Right ventricle myocardium inferior (tissue), 1 donor: ENCODE measurements at regions of chr18 and their contacts with region 1.

Region 1: GRCh38 chr18:51447351-51448342 is 250.2 kb upstream of the MEX3C start:
- DNase-seq: no peak
- ATAC-seq: peak; percentile 84

Region 2: DNA sequence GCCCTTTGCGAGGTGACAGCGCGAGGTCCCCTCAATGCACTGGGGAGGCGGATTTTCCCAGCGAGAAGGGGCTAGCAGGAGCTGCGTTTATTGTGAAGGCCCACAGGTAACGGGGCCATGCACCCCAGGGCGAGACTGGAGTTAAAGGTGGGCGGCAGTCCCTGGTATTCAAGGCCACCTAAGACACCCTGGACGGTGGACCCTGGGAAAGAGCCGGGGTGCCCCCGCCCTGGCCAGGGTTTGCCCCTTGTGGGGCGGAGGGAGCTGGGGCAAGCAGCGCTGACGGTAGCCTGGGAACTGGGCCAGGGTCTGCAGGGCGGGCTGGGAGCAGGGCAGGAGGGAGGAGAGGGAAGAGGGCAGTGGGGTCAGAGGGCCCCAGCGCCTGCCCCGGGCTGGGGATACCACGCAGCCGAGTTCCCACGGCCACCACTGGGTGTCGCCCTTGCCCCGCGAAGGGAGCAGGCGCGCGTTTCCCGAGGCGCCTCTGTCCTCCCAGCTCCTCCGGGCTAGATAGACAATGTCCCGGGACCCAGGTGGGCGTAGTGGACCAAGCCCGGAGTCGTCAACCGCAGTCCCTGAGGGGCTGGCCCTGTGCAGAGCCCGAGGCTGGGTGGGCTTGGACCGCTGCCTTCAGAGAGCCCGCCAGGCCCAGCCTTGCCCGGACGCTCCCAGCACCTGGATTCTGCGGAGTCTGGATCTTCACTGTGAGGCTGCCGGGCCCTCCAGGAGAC is 337.4 kb before region 1 on chr18:
- intact Hi-C with region 1: loop called (anchors 10 kb)
- DNase-seq: peak; percentile 79
- ATAC-seq: peak; percentile 87

Region 3: GRCh38 chr18:51290860-51291259 is 156.8 kb before region 1 on chr18:
- intact Hi-C with region 1: no loop called
- DNase-seq: no peak
- ATAC-seq: no peak

Region 4: GRCh38 chr18:51498085-51498855 is 50.6 kb after region 1 on chr18:
- intact Hi-C with region 1: loop called (anchors 5 kb)
- DNase-seq: peak; percentile 53
- ATAC-seq: peak; percentile 95